ENCODE measurements at regions of chr10 and their contacts with region 1.

Region 1: GRCh38 chr10:14604181-14605142 is 170.2 kb downstream of the FAM107B start:
- DNase-seq: peak; percentile 56 to 82 (median 65)
- ATAC-seq: peak; percentile 90
- H3K4me3 ChIP-seq: peak overlapping the region; percentile 40
- H3K4me3 Mint-ChIP-seq: peak overlapping the region; percentile 86 to 99 (median 97)
- H3K27ac ChIP-seq: peak overlapping the region; percentile 73
- H3K27ac Mint-ChIP-seq: peak overlapping the region; percentile 57 to 99 (median 94)
- H3K4me1 ChIP-seq: peaks cover 29 to 31% of the 10 kb centered on the region in 2 donors
- H3K4me1 Mint-ChIP-seq: peaks cover 45 to 62% (median 57%) of the 10 kb centered on the region in 7 donors
- H3K27me3 ChIP-seq: no peaks in the 10 kb centered on the region
- H3K27me3 Mint-ChIP-seq: peaks cover 0 to 2% (median 0%) of the 10 kb centered on the region in 5 donors

Region 2: GRCh38 chr10:14507176-14507575 is 97.3 kb before region 1 on chr10:
- CTCF ChIA-PET with region 1: no interaction called
- POLR2A ChIA-PET with region 1: no interaction called
- intact Hi-C with region 1: loop called in 1 of 2 experiments (anchors 2 kb)
- DNase-seq: peak in 8 of 9 donors; percentile 21 to 89 (median 82)
- ATAC-seq: peak; percentile 96
- H3K4me3 ChIP-seq: no peak overlapping the region
- H3K4me3 Mint-ChIP-seq: peak overlapping the region; percentile 5 to 80 (median 62)
- H3K27ac ChIP-seq: peak overlapping the region; percentile 72
- H3K27ac Mint-ChIP-seq: peak overlapping the region; percentile 68 to 100 (median 92)
- H3K4me1 ChIP-seq: peaks cover 21 to 25% of the 10 kb centered on the region in 2 donors
- H3K4me1 Mint-ChIP-seq: peaks cover 17 to 41% (median 32%) of the 10 kb centered on the region in 7 donors
- H3K27me3 ChIP-seq: no peaks in the 10 kb centered on the region
- H3K27me3 Mint-ChIP-seq: no peaks in the 10 kb centered on the region

Region 3: GRCh38 chr10:14528450-14528849 is 76.0 kb before region 1 on chr10:
- CTCF ChIA-PET with region 1: no interaction called
- POLR2A ChIA-PET with region 1: no interaction called
- intact Hi-C with region 1: no loop called
- DNase-seq: peak in 7 of 9 donors; percentile 18 to 52 (median 39)
- ATAC-seq: peak; percentile 85
- H3K4me3 ChIP-seq: no peak overlapping the region
- H3K4me3 Mint-ChIP-seq: peak overlapping the region in 9 of 10 donors; percentile 55 to 79 (median 65)
- H3K27ac ChIP-seq: no peak overlapping the region
- H3K27ac Mint-ChIP-seq: peak overlapping the region; percentile 15 to 79 (median 58)
- H3K4me1 ChIP-seq: peaks cover 33 to 38% of the 10 kb centered on the region in 2 donors
- H3K4me1 Mint-ChIP-seq: peaks cover 59 to 91% (median 82%) of the 10 kb centered on the region in 7 donors
- H3K27me3 ChIP-seq: no peaks in the 10 kb centered on the region
- H3K27me3 Mint-ChIP-seq: no peaks in the 10 kb centered on the region

Region 4: GRCh38 chr10:14571866-14572507 is 32.5 kb before region 1 on chr10:
- CTCF ChIA-PET with region 1: interaction called, 3 read pairs
- POLR2A ChIA-PET with region 1: interaction called, 15 read pairs
- intact Hi-C with region 1: loop called (anchors 1 kb)
- DNase-seq: peak in 8 of 9 donors; percentile 47 to 94 (median 90)
- ATAC-seq: peak; percentile 80
- H3K4me3 ChIP-seq: peak overlapping the region; percentile 67
- H3K4me3 Mint-ChIP-seq: peak overlapping the region; percentile 86 to 98 (median 96)
- H3K27ac ChIP-seq: peak overlapping the region; percentile 87
- H3K27ac Mint-ChIP-seq: peak overlapping the region; percentile 93 to 100 (median 99)
- H3K4me1 ChIP-seq: peaks cover 40 to 53% of the 10 kb centered on the region in 2 donors
- H3K4me1 Mint-ChIP-seq: peaks cover 42 to 88% (median 79%) of the 10 kb centered on the region in 7 donors
- H3K27me3 ChIP-seq: no peaks in the 10 kb centered on the region
- H3K27me3 Mint-ChIP-seq: no peaks in the 10 kb centered on the region

Region 5: DNA sequence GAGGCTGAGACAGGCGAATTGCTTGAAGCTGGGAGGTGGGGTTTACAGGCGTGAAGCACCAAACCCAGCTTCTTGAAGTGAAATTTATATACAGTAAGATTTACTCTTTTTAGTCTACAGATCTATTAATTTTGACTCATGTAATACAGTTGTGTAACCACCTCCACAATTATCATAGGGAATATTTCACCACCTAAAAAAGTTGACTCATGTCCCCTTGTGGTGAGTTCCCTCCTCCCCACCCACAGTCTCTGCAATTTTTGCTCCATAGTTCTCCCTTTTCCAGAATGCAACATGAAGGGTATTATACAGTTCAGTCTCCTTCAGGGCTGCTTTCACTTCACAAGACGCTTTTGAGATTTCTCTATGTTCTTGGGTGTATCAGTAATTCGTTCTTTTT is 13.4 kb after region 1 on chr10:
- CTCF ChIA-PET with region 1: no interaction called
- POLR2A ChIA-PET with region 1: interaction called, 8 read pairs
- intact Hi-C with region 1: loop called in 1 of 2 experiments (anchors 1 kb)
- DNase-seq: no peak
- ATAC-seq: peak; percentile 74
- H3K4me3 ChIP-seq: no peak overlapping the region
- H3K4me3 Mint-ChIP-seq: peak overlapping the region in 1 of 10 donors; percentile 19
- H3K27ac ChIP-seq: no peak overlapping the region
- H3K27ac Mint-ChIP-seq: peak overlapping the region in 5 of 9 donors; percentile 51 to 82 (median 66)
- H3K4me1 ChIP-seq: peaks cover 6 to 11% of the 10 kb centered on the region in 2 donors
- H3K4me1 Mint-ChIP-seq: peaks cover 21 to 34% (median 25%) of the 10 kb centered on the region in 7 donors
- H3K27me3 ChIP-seq: no peaks in the 10 kb centered on the region
- H3K27me3 Mint-ChIP-seq: no peaks in the 10 kb centered on the region

Region 6: GRCh38 chr10:14822879-14823755 is 218.7 kb after region 1 on chr10:
- CTCF ChIA-PET with region 1: no interaction called
- POLR2A ChIA-PET with region 1: no interaction called
- intact Hi-C with region 1: loop called in 1 of 2 experiments (anchors 5 kb)
- DNase-seq: peak in 6 of 9 donors; percentile 14 to 54 (median 38)
- ATAC-seq: peak; percentile 64
- H3K4me3 ChIP-seq: no peak overlapping the region
- H3K4me3 Mint-ChIP-seq: no peak overlapping the region
- H3K27ac ChIP-seq: no peak overlapping the region
- H3K27ac Mint-ChIP-seq: peak overlapping the region in 4 of 9 donors; percentile 5 to 14 (median 10)
- H3K4me1 ChIP-seq: no peaks in the 10 kb centered on the region
- H3K4me1 Mint-ChIP-seq: peaks cover 0 to 15% (median 3%) of the 10 kb centered on the region in 7 donors
- H3K27me3 ChIP-seq: no peaks in the 10 kb centered on the region
- H3K27me3 Mint-ChIP-seq: peaks cover 0 to 10% (median 0%) of the 10 kb centered on the region in 5 donors

Measured in naive thymus-derived CD4-positive, alpha-beta T cell (primary cell).